Activated CD4-positive, alpha-beta T cell treated with anti-CD3 and anti-CD28 coated beads for 36 hours (primary cell): ENCODE measurements at regions of chr10 and their contacts with region 1.

Region 1: GRCh38 chr10:98309366-98310355 is 41.7 kb upstream of the LOXL4 start:
- DNase-seq: peak; percentile 46
- ATAC-seq: no peak
- H3K4me3 Mint-ChIP-seq: no peak overlapping the region
- H3K27ac Mint-ChIP-seq: no peak overlapping the region
- H3K4me1 Mint-ChIP-seq: no peaks in the 10 kb centered on the region
- H3K27me3 Mint-ChIP-seq: peaks cover 20% of the 10 kb centered on the region

Region 2: GRCh38 chr10:97196223-97197029 is 1113.2 kb before region 1 on chr10:
- CTCF ChIA-PET with region 1: no interaction called
- POLR2A ChIA-PET with region 1: no interaction called
- intact Hi-C with region 1: no loop called
- DNase-seq: peak; percentile 77
- ATAC-seq: peak; percentile 93
- H3K4me3 Mint-ChIP-seq: peak overlapping the region; percentile 62
- H3K27ac Mint-ChIP-seq: no peak overlapping the region
- H3K4me1 Mint-ChIP-seq: peaks cover 4% of the 10 kb centered on the region
- H3K27me3 Mint-ChIP-seq: peaks cover 11% of the 10 kb centered on the region

Region 3: GRCh38 chr10:98013122-98013521 is 296.5 kb before region 1 on chr10:
- CTCF ChIA-PET with region 1: no interaction called
- POLR2A ChIA-PET with region 1: no interaction called
- intact Hi-C with region 1: no loop called
- DNase-seq: no peak
- ATAC-seq: no peak
- H3K4me3 Mint-ChIP-seq: no peak overlapping the region
- H3K27ac Mint-ChIP-seq: no peak overlapping the region
- H3K4me1 Mint-ChIP-seq: no peaks in the 10 kb centered on the region
- H3K27me3 Mint-ChIP-seq: peaks cover 19% of the 10 kb centered on the region

Region 4: GRCh38 chr10:98160026-98160425 is 149.6 kb before region 1 on chr10:
- CTCF ChIA-PET with region 1: no interaction called
- POLR2A ChIA-PET with region 1: no interaction called
- intact Hi-C with region 1: no loop called
- DNase-seq: no peak
- ATAC-seq: no peak
- H3K4me3 Mint-ChIP-seq: no peak overlapping the region
- H3K27ac Mint-ChIP-seq: no peak overlapping the region
- H3K4me1 Mint-ChIP-seq: peaks cover 13% of the 10 kb centered on the region
- H3K27me3 Mint-ChIP-seq: no peaks in the 10 kb centered on the region

Region 5: GRCh38 chr10:98170249-98171117 is 139.2 kb before region 1 on chr10:
- CTCF ChIA-PET with region 1: interaction called, 12 read pairs
- POLR2A ChIA-PET with region 1: no interaction called
- intact Hi-C with region 1: loop called (anchors 1 to 10 kb)
- DNase-seq: peak; percentile 28
- ATAC-seq: peak; percentile 65
- H3K4me3 Mint-ChIP-seq: no peak overlapping the region
- H3K27ac Mint-ChIP-seq: no peak overlapping the region
- H3K4me1 Mint-ChIP-seq: peaks cover 18% of the 10 kb centered on the region
- H3K27me3 Mint-ChIP-seq: no peaks in the 10 kb centered on the region

Region 6: DNA sequence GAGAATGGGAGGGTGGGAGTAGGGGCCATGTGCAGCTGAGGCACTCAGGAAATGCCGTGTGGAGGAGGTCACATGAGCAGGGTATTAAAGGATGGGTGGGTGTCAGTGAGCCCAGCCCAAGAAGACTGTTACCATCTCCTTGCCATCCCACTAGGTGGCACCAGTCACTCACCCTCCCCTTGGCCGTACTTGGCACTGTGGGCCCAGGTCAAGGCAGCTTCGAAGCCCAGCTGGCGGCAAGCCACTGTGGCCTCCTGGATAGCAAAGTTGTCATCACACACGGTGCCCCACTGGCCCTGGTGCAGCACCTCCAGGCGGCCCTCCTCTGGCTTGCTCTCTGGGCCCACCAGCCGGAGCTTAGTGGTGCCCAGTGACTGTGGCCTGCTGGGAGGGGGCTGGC is 47.1 kb before region 1 on chr10:
- CTCF ChIA-PET with region 1: interaction called, 4 read pairs
- POLR2A ChIA-PET with region 1: no interaction called
- intact Hi-C with region 1: loop called in 1 of 2 experiments (anchors 1 kb)
- DNase-seq: peak; percentile 43
- ATAC-seq: peak; percentile 55
- H3K4me3 Mint-ChIP-seq: no peak overlapping the region
- H3K27ac Mint-ChIP-seq: no peak overlapping the region
- H3K4me1 Mint-ChIP-seq: no peaks in the 10 kb centered on the region
- H3K27me3 Mint-ChIP-seq: peaks cover 16% of the 10 kb centered on the region

Region 7: GRCh38 chr10:98361131-98362025 is 51.7 kb after region 1 on chr10:
- CTCF ChIA-PET with region 1: no interaction called
- POLR2A ChIA-PET with region 1: no interaction called
- intact Hi-C with region 1: no loop called
- DNase-seq: peak; percentile 68
- ATAC-seq: peak; percentile 97
- H3K4me3 Mint-ChIP-seq: no peak overlapping the region
- H3K27ac Mint-ChIP-seq: no peak overlapping the region
- H3K4me1 Mint-ChIP-seq: peaks cover 6% of the 10 kb centered on the region
- H3K27me3 Mint-ChIP-seq: peaks cover 2% of the 10 kb centered on the region